Left cardiac atrium (tissue), 4 donors: ENCODE measurements at regions of chr2 and their contacts with region 1.

Region 1: GRCh38 chr2:33475224-33476130 is 972 bp upstream of the RASGRP3 start:
- DNase-seq: peak; percentile 79
- ATAC-seq: peak; percentile 67 to 74

Region 2: DNA sequence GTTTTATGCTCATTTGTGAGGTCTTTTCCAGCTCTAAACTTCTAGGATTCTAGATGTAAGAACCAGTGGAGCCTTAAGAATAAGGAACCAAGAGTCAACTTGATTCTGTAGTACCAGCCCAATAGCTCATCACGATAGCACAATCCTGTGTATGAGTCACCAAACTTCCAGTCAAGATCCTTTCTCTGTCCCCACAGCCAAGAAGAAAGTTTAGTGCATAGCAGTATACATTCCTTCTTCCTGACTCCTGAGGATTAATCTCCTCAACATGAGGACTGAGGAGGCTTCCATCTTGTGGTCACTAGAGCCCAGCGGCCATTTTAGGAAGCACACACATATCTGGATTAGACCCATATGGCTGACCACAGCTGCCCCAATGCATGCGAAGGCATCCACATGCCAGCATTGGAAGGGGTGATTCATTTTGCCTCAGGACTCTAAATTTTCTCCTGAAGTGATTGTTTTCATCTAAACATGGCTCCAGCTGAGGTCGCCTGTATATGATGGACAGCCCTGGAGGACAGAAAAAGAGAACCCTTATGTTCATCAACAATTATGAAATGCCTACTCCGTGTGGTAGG is 54.4 kb after region 1 on chr2:
- intact Hi-C with region 1: loop called (anchors 5 to 10 kb)
- DNase-seq: no peak
- ATAC-seq: peak in 1 of 2 donors; percentile 27

Region 3: DNA sequence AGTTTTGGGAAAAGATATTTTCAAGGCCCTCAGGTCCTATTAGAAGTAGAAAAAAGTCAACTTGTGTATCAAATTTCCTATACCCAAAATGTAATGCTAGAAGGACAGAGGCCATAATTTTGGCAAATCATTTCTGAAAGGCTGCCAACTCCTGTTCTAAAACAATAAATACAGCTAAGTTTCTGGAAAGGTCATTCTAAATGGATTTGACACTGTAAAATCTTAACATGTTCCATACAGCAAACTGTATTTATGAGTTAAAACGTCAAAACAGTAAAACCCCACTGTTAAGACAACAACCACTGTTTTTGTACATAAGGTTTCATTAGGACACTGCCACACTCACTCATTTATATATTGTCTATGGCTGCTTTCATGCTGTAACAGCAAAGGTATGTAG is 114.0 kb after region 1 on chr2:
- intact Hi-C with region 1: loop called in 1 of 2 experiments (anchors 5 kb)
- DNase-seq: no peak
- ATAC-seq: no peak